Activated naive CD4-positive, alpha-beta T cell treated with anti-CD3 and anti-CD28 coated beads for 36 hours (primary cell): ENCODE measurements at regions of chr6 and their contacts with region 1.

Region 1: DNA sequence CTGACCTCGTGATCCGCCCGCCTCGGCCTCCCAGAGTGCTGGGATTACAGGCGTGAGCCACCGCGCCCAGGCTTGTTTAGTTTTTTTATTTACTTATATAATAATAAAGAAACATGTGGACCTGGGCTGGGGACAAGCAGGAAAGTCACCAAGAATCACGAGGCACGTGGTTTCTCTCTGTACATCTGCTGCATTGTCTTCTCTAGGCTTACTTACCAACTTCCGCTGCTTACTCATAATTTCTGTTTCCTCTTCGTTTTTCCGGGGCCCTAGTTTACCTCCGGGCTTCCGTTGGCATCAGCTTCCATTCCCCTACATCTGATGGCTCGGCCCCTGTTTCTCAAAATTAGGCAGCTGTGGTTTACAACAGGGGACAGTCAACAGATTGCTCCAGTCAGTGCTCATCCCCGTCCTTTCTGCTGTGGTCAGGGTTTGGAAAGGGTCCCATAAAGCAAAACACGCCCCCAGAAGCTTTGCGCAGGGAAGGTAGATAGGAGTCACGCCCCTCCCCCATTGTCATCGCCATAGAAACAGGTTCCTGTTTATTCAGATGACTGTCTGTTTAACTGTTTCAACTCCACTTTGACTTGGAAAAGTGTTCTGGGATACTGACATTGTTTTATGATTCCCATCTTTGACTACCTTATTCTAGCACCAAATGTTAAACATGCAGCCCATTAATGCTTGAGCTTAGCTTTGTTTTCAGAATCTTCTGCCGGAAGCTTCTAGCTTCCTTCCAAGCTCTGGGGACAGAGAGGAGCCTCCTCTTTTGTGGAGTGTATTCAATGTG is 31.9 kb upstream of the TXLNB start:
- DNase-seq: peak; percentile 88
- H3K4me3 Mint-ChIP-seq: peak overlapping the region; percentile 77
- H3K27ac Mint-ChIP-seq: peak overlapping the region; percentile 97
- H3K4me1 Mint-ChIP-seq: peaks cover 31% of the 10 kb centered on the region
- H3K27me3 Mint-ChIP-seq: no peaks in the 10 kb centered on the region

Region 2: GRCh38 chr6:139308286-139308916 is 15.3 kb before region 1 on chr6:
- CTCF ChIA-PET with region 1: interaction called, 3 read pairs
- intact Hi-C with region 1: loop called (anchors 1 kb)
- DNase-seq: no peak
- H3K4me3 Mint-ChIP-seq: no peak overlapping the region
- H3K27ac Mint-ChIP-seq: peak overlapping the region; percentile 82
- H3K4me1 Mint-ChIP-seq: peaks cover 25% of the 10 kb centered on the region
- H3K27me3 Mint-ChIP-seq: no peaks in the 10 kb centered on the region